Right ventricle myocardium inferior (tissue), 1 donor: ENCODE measurements at regions of chr5 and their contacts with region 1.

Region 1: DNA sequence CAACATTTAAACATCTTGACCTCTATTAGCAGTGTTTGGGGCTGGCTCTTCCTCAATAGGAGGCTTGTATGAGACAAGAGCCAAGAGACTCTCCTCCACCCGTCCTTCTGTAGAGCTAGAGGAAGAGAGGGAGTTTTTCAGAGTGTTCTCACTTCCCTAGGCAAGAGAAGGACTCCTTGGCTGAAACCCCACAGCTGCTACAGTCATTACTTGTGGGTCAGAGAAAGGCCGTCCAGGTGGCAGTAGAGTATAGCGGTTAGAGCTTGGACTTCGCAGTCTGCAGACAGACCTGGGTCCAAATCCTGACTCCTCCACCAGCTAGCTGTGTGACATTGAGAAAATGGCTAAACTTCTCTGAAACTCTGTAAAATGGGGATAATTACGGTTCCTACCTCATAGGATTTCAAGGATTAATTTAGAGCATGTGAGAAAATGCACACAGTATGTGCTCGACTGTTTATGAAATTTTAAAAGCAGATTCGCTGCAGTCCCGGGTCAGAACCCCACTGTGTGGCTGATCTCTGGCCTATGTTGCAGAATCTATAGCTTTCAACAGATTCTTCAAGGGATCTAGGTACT is 80.8 kb upstream of the ARAP3 start:
- DNase-seq: no peak
- ATAC-seq: peak; percentile 21

Region 2: DNA sequence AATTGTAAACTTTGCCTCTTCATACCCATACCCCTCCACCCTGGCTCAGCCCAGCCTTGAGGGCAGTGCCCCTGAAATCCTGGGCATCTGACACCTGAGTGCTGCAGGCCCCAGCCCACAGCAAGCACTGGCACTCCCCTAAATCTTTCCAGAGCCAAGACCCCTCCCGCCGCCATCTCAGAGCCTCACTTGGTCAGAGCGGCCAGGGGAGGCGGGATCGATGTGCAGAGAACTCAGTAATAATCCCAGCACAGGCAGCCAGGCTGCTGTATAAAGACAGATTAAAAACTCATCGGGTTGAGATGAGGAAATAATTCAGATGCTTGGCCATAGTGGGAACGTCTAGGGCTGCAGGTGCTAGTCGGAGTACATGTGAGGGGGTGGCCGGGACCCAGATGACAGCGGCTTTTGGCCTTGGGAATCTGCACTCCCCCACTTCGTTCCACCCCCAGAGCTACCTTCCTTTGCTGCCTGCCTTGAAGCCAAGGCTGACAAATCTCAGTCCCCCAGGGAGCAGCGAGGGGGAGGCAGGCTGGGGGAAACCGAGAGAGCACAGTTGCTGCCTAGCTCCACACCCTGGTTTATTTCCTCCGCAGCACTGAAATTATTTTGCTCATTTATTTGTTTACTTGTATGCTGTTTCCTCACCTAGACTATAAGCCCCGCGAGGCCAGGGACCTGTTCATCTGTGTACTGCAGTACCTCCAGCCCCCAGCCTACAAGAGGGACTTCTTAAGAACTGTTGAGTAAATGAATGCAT is 61.3 kb before region 1 on chr5:
- intact Hi-C with region 1: loop called (anchors 5 kb)
- DNase-seq: no peak
- ATAC-seq: no peak

Region 3: DNA sequence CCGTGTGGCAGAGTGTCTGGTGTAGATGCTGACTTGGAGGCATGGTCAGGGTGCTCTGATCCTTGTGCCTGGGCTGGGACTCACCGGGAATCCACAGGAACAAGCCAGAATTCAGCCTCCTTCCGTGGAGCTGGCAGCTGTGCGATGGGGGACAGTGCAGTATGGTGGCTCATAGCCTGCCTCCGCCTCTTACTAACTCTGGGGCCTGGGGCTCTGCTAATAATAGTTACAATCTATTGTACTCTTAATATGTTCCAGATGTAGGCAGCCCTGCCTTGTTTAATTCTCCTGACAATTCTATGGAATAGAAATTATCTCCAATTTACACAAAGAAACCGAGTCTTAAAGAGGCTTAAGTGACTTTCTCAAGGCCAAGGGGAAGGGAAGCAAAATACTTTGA is 37.7 kb after region 1 on chr5:
- intact Hi-C with region 1: loop called (anchors 5 kb)
- DNase-seq: no peak
- ATAC-seq: no peak

Region 4: GRCh38 chr5:141960449-141961202 is 197.7 kb after region 1 on chr5:
- intact Hi-C with region 1: loop called (anchors 5 kb)
- DNase-seq: peak; percentile 91
- ATAC-seq: peak; percentile 89

Region 5: DNA sequence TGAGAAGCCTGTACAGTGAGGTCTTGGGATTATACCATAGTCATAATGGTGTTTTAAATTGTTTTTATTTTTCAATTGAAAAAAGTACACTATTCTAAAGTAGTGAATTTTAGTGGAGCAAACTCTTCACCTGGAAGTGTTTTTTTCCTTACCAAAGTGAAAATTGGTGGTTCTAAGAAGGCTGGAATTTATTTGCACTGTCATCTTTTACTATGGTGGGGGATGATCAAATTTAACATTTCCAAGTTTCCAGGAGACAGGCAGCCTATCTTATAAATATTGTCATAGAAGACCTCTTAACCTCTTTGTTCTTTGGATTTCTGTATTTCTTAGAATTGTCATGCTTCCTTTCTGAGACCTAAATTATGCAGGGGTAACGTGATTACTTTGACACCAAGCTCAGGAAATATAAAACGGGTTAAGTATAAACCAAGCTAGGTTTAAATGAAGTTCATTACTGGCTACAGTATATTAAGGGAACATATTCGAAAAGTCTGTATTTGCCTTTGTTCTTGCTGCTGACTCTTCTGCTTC is 365.9 kb after region 1 on chr5:
- intact Hi-C with region 1: no loop called
- DNase-seq: no peak
- ATAC-seq: no peak